Activated CD4-positive, alpha-beta memory T cell treated with anti-CD3 and anti-CD28 coated beads for 36 hours (primary cell): ENCODE measurements at regions of chr1 and their contacts with region 1.

Region 1: DNA sequence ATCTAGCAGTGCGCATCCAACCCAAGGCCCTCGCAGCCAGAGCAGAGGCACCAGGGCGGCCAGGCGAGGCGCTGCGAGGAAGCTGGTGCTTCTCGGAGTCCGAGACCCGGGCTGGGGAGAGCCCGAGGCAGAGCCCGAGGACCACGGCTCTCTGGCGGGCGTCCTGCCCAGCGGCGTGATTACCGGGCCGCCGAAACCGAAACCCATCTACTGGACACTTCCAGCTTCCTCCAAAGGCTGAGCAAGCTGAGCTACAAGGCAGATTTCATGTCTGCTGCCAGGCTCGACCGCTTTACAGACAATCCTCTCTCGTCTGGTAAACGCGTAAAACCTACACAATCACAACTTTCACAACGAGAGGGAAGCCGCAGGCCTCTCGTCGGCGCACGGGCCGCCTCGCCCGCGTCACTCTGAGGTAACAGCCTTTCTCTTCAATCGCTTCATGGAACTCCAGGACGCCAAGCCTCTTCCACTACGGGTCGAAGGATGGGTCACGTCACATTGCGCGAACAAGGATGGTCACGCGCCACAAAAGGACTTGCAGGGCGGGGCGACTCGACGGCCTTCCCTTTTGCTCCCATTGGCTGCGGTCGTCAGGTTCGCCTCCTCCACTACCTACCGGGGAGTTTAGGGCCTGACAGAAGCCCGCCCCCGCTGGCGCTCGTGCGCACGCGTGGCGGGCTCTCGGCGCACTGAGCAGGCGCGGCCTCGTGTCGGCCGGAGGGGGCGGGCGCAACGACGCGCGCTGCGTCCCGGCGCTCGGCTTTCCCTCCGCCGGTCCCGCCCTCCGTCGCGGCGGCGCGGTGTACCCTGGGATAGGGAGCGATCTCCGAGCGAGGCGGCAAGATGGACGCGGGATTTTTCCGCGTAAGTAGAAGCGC is at the start of gene SRRM1:
- DNase-seq: peak; percentile 100
- H3K4me3 Mint-ChIP-seq: peak within 1 kb of the TSS; percentile 96
- H3K27ac Mint-ChIP-seq: peak within 1 kb of the TSS; percentile 98
- H3K4me1 Mint-ChIP-seq: peaks cover 53% of the 10 kb centered on the region
- H3K27me3 Mint-ChIP-seq: no peaks in the 10 kb centered on the region
- total RNA-seq, gene SRRM1: 225 to 227 TPM

Region 2: GRCh38 chr1:24150234-24151174 is 492.2 kb before region 1 on chr1:
- CTCF ChIA-PET with region 1: interaction called, 4 read pairs
- POLR2A ChIA-PET with region 1: interaction called, 3 read pairs
- intact Hi-C with region 1: loop called (anchors 5 kb)
- DNase-seq: peak; percentile 93
- H3K4me3 Mint-ChIP-seq: peak overlapping the region; percentile 63
- H3K27ac Mint-ChIP-seq: no peak overlapping the region
- H3K4me1 Mint-ChIP-seq: peaks cover 17% of the 10 kb centered on the region
- H3K27me3 Mint-ChIP-seq: peaks cover 16% of the 10 kb centered on the region

Region 3: GRCh38 chr1:24421502-24421901 is 221.2 kb before region 1 on chr1:
- CTCF ChIA-PET with region 1: no interaction called
- POLR2A ChIA-PET with region 1: no interaction called
- intact Hi-C with region 1: no loop called
- DNase-seq: no peak
- H3K4me3 Mint-ChIP-seq: no peak overlapping the region
- H3K27ac Mint-ChIP-seq: no peak overlapping the region
- H3K4me1 Mint-ChIP-seq: peaks cover 66% of the 10 kb centered on the region
- H3K27me3 Mint-ChIP-seq: no peaks in the 10 kb centered on the region

Region 4: DNA sequence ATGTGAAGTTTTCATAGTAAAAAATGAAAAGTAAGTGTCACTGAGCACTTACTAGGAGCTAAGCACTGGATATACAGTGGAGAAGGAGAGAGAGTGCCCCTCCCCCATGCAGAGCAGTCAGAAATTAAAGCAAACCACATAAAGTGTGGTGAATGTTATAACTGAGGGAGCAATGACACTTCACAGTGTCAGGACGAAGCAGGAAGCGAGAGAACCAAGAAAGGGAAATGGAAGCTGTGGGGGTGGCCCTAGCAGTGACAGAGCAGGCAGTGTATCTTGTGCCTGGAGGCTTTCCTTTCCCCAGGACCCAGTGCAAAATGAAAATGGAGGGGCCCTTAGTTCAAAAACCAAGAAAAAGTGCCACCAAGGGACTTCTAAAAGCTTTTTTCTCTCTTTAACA is 161.6 kb before region 1 on chr1:
- CTCF ChIA-PET with region 1: no interaction called
- POLR2A ChIA-PET with region 1: no interaction called
- intact Hi-C with region 1: loop called (anchors 5 kb)
- DNase-seq: peak; percentile 83
- H3K4me3 Mint-ChIP-seq: peak overlapping the region; percentile 58
- H3K27ac Mint-ChIP-seq: peak overlapping the region; percentile 97
- H3K4me1 Mint-ChIP-seq: peaks cover 60% of the 10 kb centered on the region
- H3K27me3 Mint-ChIP-seq: no peaks in the 10 kb centered on the region

Region 5: GRCh38 chr1:24541711-24542346 is 100.9 kb before region 1 on chr1:
- CTCF ChIA-PET with region 1: interaction called, 3 read pairs
- POLR2A ChIA-PET with region 1: interaction called, 4 read pairs
- intact Hi-C with region 1: loop called (anchors 1 kb)
- DNase-seq: peak; percentile 58
- H3K4me3 Mint-ChIP-seq: no peak overlapping the region
- H3K27ac Mint-ChIP-seq: peak overlapping the region; percentile 93
- H3K4me1 Mint-ChIP-seq: peaks cover 65% of the 10 kb centered on the region
- H3K27me3 Mint-ChIP-seq: no peaks in the 10 kb centered on the region

Region 6: DNA sequence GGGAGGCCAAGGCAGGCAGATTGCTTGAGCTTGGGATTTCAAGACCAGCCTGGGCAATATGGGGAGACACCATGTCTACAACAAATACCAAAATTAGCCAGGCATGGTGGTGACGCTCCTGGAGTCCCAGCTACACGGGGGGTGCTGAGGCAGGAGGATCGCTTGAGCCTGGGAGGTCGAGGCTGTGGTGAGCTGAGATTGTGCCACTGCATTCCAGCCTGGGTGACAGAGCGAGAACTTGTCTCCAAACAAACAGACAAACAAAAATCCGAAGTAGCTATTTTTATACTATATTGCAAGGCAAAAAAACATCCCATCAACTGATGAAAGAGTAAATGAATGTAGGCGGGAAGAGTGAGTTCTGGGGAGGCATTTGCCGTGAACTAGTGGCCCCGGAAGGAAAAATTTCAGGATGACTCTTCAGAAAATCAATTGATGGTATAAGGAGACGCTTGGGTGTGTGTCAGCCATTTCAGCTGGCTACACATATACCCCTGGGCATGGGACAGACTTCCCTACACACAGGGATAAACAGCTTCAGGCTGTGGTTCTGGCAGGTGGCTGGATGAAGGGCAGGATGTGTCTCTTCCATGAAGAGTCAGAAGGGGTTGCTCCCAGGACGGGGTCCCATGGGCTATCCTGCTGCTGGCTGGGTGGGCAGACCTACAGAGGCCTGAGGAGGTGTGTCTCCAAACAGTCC is 46.1 kb before region 1 on chr1:
- CTCF ChIA-PET with region 1: no interaction called
- POLR2A ChIA-PET with region 1: no interaction called
- intact Hi-C with region 1: no loop called
- DNase-seq: no peak
- H3K4me3 Mint-ChIP-seq: no peak overlapping the region
- H3K27ac Mint-ChIP-seq: no peak overlapping the region
- H3K4me1 Mint-ChIP-seq: no peaks in the 10 kb centered on the region
- H3K27me3 Mint-ChIP-seq: peaks cover 16% of the 10 kb centered on the region

Region 7: GRCh38 chr1:24847995-24848881 is 205.5 kb after region 1 on chr1:
- CTCF ChIA-PET with region 1: no interaction called
- POLR2A ChIA-PET with region 1: no interaction called
- intact Hi-C with region 1: no loop called
- DNase-seq: peak; percentile 94
- H3K4me3 Mint-ChIP-seq: peak overlapping the region; percentile 65
- H3K27ac Mint-ChIP-seq: no peak overlapping the region
- H3K4me1 Mint-ChIP-seq: peaks cover 14% of the 10 kb centered on the region
- H3K27me3 Mint-ChIP-seq: no peaks in the 10 kb centered on the region

Region 8: GRCh38 chr1:25239681-25240541 is 597.2 kb after region 1 on chr1:
- CTCF ChIA-PET with region 1: no interaction called
- POLR2A ChIA-PET with region 1: no interaction called
- intact Hi-C with region 1: loop called (anchors 10 kb)
- DNase-seq: peak; percentile 97
- H3K4me3 Mint-ChIP-seq: peak overlapping the region; percentile 84
- H3K27ac Mint-ChIP-seq: peak overlapping the region; percentile 96
- H3K4me1 Mint-ChIP-seq: peaks cover 51% of the 10 kb centered on the region
- H3K27me3 Mint-ChIP-seq: no peaks in the 10 kb centered on the region